Activated B cell treated with CpG ODN at 0.5 μM for 24 hours (primary cell): ENCODE measurements at regions of chr10 and their contacts with region 1.

Region 1: GRCh38 chr10:103712570-103713498 is 142.5 kb downstream of the SH3PXD2A start:
- DNase-seq: peak; percentile 73
- ATAC-seq: peak; percentile 94
- H3K4me3 Mint-ChIP-seq: no peak overlapping the region
- H3K27ac Mint-ChIP-seq: no peak overlapping the region
- H3K4me1 Mint-ChIP-seq: no peaks in the 10 kb centered on the region
- H3K27me3 Mint-ChIP-seq: no peaks in the 10 kb centered on the region
- CTCF ChIP-seq: no peak

Region 2: DNA sequence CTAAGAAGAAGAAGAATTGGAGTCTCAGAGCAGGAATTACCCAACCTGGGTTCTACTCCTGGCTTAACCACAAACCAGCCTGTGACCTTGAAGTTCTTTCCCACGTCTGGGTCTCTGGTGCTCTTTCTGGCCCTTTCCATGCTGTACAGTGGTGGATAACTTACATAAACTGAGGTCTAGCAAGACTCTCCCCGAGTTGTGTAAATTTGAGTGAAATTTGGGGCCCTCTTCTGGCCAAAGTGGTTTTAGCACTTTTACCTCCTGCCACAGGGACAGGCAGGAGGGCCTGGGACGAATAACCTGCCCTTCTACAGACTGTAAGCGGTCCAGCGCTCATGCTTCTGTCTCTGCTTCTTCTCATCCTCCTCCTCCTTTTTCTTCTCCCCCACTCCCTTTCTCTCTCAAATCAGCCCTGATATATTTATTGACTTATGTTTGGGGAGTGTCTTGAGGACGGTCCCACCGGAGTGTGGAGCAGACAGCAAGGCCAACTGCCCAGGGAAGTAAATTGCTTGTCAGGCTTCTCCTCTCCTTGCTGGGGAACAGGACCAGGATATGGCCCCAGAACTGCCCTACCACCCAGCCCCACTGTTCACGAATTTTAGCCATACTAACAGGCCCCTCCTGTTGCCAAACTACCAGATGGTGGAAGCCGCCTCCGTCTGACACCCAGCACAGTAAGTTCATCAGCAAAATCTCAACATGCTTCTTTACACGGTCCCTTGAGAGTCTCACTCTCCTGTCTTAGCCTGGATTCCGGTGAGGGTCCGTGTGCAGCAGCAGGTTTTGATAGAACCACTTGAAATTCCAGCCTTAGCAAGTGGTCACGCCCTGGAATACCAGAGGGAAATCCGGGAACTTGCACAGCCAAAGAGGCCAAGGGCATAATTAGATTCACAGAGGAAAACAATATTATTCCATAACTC is 146.6 kb after region 1 on chr10:
- CTCF ChIA-PET with region 1: interaction called, 38 read pairs
- POLR2A ChIA-PET with region 1: no interaction called
- intact Hi-C with region 1: loop called (anchors 1 kb)
- DNase-seq: no peak
- ATAC-seq: peak; percentile 70
- H3K4me3 Mint-ChIP-seq: no peak overlapping the region
- H3K27ac Mint-ChIP-seq: no peak overlapping the region
- H3K4me1 Mint-ChIP-seq: peaks cover 10% of the 10 kb centered on the region
- H3K27me3 Mint-ChIP-seq: peaks cover 24% of the 10 kb centered on the region
- CTCF ChIP-seq: no peak

Region 3: DNA sequence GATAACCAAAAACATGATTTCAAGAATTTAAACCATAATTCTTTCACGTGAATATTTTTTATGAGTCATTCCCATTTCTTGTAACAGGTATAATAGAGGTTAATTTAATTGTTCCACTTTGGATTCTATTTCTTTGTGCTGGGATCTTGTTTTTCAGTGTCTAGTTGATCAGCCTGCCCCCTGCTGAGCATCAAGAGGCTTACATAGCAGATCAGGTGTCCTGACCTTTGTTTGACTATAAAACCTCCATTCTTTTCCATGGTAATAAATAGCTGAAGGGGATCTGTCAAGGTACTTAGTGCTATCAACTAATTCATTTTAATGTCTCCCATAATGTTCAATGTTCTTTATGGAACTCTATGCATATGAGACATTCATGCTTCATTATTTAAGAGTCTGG is 367.9 kb after region 1 on chr10:
- CTCF ChIA-PET with region 1: no interaction called
- POLR2A ChIA-PET with region 1: no interaction called
- intact Hi-C with region 1: loop called (anchors 1 kb)
- DNase-seq: no peak
- ATAC-seq: no peak
- H3K4me3 Mint-ChIP-seq: no peak overlapping the region
- H3K27ac Mint-ChIP-seq: no peak overlapping the region
- H3K4me1 Mint-ChIP-seq: no peaks in the 10 kb centered on the region
- H3K27me3 Mint-ChIP-seq: peaks cover 2% of the 10 kb centered on the region
- CTCF ChIP-seq: no peak

Region 4: GRCh38 chr10:104209575-104210198 is 496.9 kb after region 1 on chr10:
- CTCF ChIA-PET with region 1: interaction called, 6 read pairs
- POLR2A ChIA-PET with region 1: no interaction called
- intact Hi-C with region 1: loop called (anchors 1 kb)
- DNase-seq: no peak
- ATAC-seq: no peak
- H3K4me3 Mint-ChIP-seq: no peak overlapping the region
- H3K27ac Mint-ChIP-seq: no peak overlapping the region
- H3K4me1 Mint-ChIP-seq: no peaks in the 10 kb centered on the region
- H3K27me3 Mint-ChIP-seq: peaks cover 24% of the 10 kb centered on the region
- CTCF ChIP-seq: no peak

Region 5: GRCh38 chr10:104614245-104614831 is 901.5 kb after region 1 on chr10:
- CTCF ChIA-PET with region 1: no interaction called
- POLR2A ChIA-PET with region 1: no interaction called
- intact Hi-C with region 1: loop called (anchors 10 kb)
- DNase-seq: no peak
- ATAC-seq: no peak
- H3K4me3 Mint-ChIP-seq: no peak overlapping the region
- H3K27ac Mint-ChIP-seq: no peak overlapping the region
- H3K4me1 Mint-ChIP-seq: no peaks in the 10 kb centered on the region
- H3K27me3 Mint-ChIP-seq: peaks cover 10% of the 10 kb centered on the region
- CTCF ChIP-seq: no peak